Activated T-helper 1 cell treated with anti-CD3 and anti-CD28 coated beads, Interleukin-12 subunit alpha, Interleukin-12 subunit beta, Interleukin-2, Interleukin-4 antibody, amounts not matched to agents 30 ng/mL and 10 ng/mL and 1 ng/mL, durations not matched to agents 14 hours and 24 hours and 36 hours (primary cell): ENCODE measurements at regions of chr5 and their contacts with region 1.

Region 1: DNA sequence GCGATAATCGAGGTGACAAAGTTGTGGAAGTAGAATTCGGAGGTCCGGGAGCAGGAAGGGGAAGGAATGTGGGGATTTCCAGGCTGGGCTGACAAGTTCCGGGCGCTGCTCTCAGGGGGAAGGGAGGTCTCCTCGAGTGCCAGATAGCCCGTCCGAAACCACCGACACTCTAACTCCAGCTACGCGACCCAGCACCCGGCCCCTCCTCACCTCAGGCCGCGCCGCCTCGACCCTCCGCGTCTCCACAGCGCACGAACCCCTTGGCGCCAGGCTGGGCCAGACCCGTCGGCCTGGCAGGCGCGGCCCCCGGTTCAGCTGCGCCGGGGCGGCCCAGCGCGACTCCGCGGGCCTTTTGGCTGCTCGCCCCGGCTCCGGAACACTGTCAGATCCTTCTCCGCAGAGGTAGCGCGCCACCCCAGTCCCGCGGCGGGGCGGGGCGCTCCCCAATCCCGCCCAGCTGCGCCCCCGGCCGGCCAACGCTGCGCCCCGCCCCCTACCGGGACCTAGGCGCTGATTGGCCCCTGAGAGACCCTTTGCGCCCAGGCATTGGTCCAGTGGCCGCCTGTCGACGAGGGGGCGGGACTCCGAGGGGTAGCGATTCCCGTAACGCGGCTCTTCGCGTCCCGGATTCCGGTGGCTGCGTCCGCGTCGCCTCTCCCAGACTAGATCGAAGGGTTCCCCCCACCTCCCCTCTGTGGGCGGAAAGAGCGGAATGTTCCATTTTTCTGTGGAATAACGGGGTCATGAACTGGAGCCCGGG is at the start of gene IL6ST:
- DNase-seq: peak; percentile 95
- H3K4me3 Mint-ChIP-seq: peak within 1 kb of the TSS; percentile 95
- H3K27ac Mint-ChIP-seq: peak within 1 kb of the TSS; percentile 95
- H3K4me1 Mint-ChIP-seq: peaks cover 66% of the 10 kb centered on the region
- H3K27me3 Mint-ChIP-seq: no peaks in the 10 kb centered on the region
- total RNA-seq, gene IL6ST: 85.8 and 86.1 TPM in 2 replicates

Region 2: DNA sequence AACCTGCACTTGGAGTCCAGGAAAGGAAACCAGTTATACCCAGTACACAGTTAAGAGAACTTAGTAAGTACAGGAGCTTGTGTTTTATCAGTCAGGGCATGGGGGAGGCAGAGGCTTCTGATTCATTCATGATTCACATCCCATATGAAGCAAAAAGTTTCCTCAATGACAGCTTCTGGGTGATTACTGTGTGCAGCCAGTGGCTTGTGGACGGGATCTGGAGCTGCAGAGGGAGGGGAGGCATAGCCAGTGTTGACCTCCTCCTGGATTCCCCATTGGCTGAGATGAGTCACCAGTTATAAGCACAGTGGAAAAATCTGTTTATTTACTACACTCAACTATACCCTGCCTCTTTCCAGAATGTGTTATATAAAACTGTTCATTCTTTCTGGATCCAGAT is 125.9 kb before region 1 on chr5:
- intact Hi-C with region 1: loop called (anchors 2 kb)
- DNase-seq: no peak
- H3K4me3 Mint-ChIP-seq: no peak overlapping the region
- H3K27ac Mint-ChIP-seq: peak overlapping the region; percentile 78
- H3K4me1 Mint-ChIP-seq: peaks cover 14% of the 10 kb centered on the region
- H3K27me3 Mint-ChIP-seq: no peaks in the 10 kb centered on the region

Region 3: DNA sequence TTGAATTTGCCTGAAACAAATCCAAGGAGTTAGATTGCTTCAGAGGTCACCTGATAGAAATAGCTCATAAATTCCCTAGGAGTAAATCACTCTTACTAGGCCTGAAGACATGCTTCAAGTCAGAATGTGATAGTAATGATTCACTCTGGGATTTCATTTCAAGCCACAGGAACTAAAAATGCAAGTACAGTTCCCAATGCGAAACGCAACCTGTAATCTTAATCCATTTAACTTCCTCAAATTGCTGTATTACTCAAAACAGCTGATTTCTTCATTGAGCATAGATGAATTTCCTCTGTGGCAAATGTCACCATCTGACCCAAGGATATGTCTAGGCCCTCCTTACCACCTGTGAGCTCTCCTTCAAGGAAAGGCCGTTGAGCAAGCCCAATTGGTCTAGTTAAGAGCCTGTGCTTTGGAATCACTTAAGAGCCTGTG is 32.1 kb after region 1 on chr5:
- intact Hi-C with region 1: loop called (anchors 1 kb)
- DNase-seq: no peak
- H3K4me3 Mint-ChIP-seq: no peak overlapping the region
- H3K27ac Mint-ChIP-seq: no peak overlapping the region
- H3K4me1 Mint-ChIP-seq: peaks cover 23% of the 10 kb centered on the region
- H3K27me3 Mint-ChIP-seq: peaks cover 32% of the 10 kb centered on the region

Region 4: DNA sequence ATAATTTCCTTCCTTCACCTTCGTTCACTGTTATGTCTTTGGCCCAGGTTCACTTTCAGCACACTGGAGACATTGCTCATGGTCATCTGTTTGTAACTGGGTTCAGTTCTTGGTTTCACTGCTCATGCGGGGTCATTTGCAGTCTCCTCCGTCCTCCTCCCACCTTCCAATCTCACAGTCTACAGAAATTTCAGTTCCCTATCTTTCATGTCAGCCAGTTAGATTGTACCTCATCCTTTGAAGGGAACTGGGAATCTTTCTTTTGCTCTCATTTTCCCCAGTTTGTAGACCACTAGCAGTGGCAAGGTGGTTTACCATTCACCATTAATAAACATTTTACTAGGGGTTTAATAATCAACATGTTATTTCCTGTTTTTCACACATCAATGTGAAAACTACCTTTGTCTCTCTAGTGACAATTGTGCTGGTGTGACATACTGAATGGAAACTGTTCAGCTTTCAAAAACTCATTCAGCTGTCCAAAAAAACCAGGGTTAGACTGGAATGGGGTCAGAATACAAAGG is 100.9 kb after region 1 on chr5:
- intact Hi-C with region 1: loop called (anchors 1 kb)
- DNase-seq: no peak
- H3K4me3 Mint-ChIP-seq: peak overlapping the region; percentile 50
- H3K27ac Mint-ChIP-seq: peak overlapping the region; percentile 87
- H3K4me1 Mint-ChIP-seq: peaks cover 83% of the 10 kb centered on the region
- H3K27me3 Mint-ChIP-seq: no peaks in the 10 kb centered on the region

Region 5: DNA sequence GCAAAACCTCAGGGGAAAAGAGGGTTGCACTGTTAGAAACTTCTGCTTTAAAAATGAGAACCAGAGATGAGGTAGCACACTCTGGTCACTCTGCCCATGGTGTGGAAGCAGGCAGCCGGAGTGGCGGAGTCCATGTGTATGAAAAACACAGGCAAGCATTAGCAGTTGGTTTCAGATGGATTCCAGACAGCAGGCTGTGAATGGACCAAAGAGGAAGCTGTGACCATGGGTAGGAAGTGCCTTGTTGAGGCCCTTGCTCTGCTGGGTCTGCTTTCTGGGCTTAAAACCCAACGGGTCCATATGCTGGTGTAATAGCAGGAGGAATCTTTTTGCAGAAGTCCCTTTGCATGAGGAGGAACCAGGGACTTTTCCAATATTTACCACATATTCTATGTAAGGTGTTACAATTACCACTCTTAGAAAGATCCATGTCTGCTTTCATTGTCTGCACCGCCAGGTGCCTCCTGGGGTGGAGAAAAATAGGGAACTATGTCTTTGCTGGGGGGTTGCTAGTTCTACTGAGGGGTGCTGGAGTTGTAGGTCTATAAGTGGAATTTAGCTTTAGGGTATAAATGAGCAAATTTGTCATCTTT is 161.3 kb after region 1 on chr5:
- intact Hi-C with region 1: loop called (anchors 2 kb)
- DNase-seq: no peak
- H3K4me3 Mint-ChIP-seq: peak overlapping the region; percentile 25
- H3K27ac Mint-ChIP-seq: peak overlapping the region; percentile 97
- H3K4me1 Mint-ChIP-seq: peaks cover 88% of the 10 kb centered on the region
- H3K27me3 Mint-ChIP-seq: no peaks in the 10 kb centered on the region

Region 6: DNA sequence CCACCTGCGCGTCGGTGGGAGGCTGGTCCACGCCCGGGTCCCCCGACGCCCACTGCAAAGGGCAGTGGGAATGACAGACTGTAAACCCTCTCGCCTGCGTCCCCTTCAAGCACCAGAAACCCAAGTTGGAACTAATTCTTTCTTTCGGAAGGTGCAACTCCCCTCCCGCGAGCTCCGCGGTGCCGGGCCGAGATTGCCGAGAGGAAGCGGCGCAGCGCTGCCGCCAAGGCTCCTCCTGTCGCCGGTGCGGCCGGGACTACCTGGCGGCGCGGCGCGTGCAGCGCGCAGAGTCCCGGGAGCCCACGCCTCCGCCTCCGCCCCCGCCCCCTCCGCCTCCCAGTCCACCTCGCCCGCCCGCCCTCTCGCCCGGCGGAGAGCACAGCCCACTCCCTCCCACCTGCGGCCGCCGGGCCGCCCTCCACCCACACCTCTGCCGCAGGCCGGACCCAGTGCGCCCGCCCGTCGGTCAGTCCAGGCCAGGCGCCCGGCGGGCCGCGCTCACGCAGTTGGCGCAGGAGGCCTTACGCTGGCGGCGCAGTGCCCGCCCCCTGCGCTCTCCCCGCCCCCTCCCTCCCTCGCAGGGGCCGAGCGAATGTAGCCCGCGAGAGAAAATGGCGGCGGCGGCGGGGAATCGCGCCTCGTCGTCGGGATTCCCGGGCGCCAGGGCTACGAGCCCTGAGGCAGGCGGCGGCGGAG is 820.4 kb after region 1 on chr5 and contains the start of gene MAP3K1:
- intact Hi-C with region 1: loop called (anchors 5 kb)
- DNase-seq: peak; percentile 72
- H3K4me3 Mint-ChIP-seq: peak within 1 kb of the TSS; percentile 91
- H3K27ac Mint-ChIP-seq: peak within 1 kb of the TSS; percentile 82
- H3K4me1 Mint-ChIP-seq: peaks cover 48% of the 10 kb centered on the region
- H3K27me3 Mint-ChIP-seq: peaks cover 2% of the 10 kb centered on the region
- total RNA-seq, gene MAP3K1: 23.6 and 25.3 TPM in 2 replicates